KBM-7 (cell line): ENCODE measurements at regions of chr17 and their contacts with region 1.

Region 1: DNA sequence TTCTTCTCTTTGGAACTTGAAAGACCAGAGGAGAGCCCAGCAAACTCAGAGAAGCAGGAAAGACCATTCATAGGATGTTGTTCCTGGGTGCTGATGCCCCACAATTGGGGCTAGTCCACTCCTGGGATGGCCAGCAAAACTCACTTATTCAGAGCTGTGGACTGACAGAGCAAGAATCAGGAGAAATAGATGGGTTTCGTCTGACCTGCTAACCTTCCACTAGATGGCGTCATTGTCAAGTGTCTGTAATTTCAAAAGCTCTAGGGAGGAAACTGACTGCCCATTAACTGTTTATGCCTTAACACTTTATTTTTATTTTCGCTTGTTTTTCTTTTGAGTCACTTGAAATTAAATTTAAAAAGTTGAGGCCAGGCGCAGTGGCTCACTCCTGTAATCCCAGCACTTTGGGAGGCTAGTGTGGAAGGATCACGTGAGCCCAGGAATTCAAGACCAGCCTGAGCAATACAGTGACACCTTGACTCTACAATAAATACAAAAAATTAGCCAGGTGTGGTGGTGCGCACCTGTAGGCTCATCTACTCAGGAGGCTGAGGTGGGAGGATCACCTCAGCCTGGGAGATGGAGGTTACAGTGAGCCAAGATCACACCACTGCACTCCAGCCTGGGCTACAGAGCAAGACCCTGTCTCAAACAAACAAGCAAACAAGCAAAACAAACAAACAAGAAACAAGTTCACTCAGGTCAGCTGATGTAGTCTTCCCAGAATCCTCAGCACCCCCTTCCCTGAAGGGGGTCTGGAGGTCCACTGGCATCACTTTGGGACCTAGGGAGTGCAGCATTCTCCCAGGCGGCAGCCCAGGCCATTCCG is 28.6 kb upstream of the MILR1 start:
- DNase-seq: peak; percentile 80

Region 2: DNA sequence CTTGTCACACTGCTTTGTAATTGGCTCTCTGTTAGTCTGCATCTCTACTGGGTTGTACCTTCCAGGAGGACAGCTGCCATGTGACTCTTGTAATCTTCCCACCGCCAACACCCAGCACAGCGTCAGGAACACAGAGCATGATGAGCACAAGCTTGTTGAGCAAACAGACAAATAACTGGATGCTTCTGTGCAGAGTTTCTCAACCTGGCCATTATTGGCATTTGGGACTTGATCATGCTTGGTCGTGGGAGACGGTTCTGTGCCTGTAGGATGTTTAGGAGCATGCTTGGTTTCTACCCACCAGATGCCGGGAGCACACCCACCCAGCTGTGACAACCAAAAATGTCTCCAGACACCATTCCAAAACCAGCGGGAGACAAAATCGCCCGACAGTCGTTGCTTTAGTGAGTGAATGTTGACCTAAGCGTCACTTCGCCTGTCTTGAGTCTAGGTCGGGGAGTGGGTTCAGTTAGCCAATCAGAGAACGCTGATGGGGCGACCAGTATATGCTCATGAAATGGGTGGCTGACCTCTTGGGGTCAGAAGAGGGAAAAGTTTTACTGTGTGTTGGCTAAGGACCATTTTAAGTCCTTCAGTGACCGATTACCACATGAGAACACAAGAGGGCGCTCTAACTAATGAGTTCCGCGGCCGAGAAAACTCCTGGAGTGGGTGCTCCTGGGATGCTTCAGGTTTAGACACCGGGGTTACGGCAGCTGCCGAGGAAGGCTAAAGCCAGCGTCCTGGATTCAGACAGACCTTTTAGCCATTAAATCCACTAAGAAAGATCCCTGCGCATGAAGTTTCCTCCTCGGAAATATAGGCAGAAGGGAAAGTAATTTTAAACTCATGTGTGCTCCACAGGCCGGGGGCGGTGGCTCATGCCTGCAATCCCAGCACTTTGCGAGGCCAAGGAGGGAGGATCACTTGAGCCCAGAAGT is 99.5 kb before region 1 on chr17:
- in situ Hi-C with region 1: loop called (anchors 10 kb)
- DNase-seq: peak; percentile 85

Region 3: DNA sequence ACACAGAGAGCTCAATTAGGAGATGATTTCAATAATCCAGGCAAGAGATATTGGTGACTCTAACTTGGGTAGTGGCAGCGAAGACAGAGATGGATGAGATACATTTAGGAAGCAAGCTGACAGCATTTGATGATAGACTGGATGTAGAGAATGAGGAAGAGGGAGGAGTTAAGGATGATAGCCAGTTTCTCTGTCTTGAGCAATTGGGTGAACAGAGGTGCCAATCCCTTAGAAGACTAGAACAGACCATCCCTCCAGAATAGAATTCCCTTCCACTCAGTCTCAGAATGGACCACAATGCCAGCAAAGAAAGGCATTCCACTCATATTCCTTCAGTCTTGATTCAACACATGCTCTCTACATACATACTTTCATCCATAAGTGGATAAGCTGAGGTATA is 59.3 kb after region 1 on chr17:
- in situ Hi-C with region 1: no loop called
- DNase-seq: no peak

Region 4: GRCh38 chr17:64496786-64497564 is 76.6 kb after region 1 on chr17 and contains the start of gene POLG2:
- in situ Hi-C with region 1: loop called (anchors 10 kb)
- DNase-seq: peak; percentile 94

Region 5: GRCh38 chr17:64687961-64688360 is 267.6 kb after region 1 on chr17:
- in situ Hi-C with region 1: no loop called
- DNase-seq: no peak